ENCODE measurements at regions of chr6 and their contacts with region 1.

Region 1: DNA sequence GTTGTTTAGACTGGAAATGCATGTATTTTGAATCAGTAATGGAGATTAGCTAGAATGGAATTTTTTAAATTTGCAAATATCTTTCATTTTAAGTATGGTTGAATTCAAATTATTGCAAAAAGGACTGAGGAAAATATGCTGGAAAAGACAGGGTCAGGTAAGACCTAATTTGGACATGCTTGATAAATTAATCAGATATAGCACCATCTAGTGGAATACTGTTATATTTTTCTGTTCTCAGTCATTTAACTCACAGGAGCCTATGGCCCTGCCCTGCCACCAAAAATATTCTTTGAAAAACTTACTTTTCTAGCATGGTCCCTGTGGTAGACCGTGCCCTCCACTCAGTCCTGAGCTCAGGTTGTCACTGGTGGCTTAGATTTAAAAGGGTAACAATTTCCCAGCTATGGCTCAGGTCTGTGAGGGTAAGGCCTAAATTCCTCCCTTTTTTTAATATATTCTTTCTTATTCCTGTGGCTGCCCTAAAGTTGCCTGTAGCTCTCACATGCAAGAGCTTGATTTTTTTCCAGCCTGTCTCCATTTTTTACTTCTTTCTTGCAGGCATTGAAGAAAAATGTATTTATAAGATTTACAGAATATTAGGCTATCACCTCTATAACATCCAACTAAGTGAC is 25.3 kb upstream of the KIAA1586 start:
- DNase-seq: peak; percentile 56
- CTCF ChIP-seq: peak; percentile 52

Region 2: DNA sequence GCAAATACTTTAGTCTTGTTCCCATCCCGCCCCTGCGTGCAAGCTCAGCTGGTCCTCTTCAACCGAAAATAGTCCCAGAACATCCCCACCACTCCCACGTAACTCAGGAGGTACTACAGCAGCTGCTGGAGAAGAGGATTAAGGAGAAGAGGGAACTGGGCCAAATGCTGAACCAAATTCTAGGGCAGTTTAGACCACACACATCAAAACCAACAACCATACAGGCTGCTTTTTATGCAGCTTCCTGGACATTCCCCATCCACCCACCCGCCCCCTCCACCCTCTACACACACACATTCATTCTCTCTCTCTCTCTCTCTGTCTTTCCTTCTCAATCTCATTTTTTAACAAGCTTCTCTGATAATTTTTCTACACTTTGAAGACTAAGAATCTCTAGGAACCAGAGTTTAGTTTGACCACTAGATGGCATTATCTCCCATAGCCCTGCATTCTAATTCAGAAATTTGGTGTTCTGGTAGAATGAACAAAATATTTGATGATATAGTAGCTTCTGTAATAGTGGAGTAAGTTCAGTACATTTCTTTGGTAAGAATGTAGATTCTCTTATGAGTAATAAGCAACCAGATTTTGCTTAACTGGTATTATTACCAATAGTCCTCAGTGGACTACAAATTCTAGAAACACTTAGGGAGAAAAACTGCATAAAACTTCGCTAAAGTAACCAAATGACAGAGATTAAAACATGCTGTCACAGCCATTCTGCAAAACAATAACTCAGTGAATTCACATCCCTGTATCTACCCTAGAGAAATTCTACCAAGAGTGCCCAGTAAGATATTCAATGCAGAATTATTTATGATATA is 118.3 kb before region 1 on chr6:
- in situ Hi-C with region 1: loop called (anchors 25 kb)
- DNase-seq: peak; percentile 20
- CTCF ChIP-seq: peak; percentile 63

Measured in GM13977 (cell line).